Activated CD4-positive, alpha-beta T cell treated with anti-CD3 and anti-CD28 coated beads, Interleukin-2, amount 10 ng/mL, durations not matched to agents 24 days and 14 days (primary cell): ENCODE measurements at regions of chr18 and their contacts with region 1.

Region 1: DNA sequence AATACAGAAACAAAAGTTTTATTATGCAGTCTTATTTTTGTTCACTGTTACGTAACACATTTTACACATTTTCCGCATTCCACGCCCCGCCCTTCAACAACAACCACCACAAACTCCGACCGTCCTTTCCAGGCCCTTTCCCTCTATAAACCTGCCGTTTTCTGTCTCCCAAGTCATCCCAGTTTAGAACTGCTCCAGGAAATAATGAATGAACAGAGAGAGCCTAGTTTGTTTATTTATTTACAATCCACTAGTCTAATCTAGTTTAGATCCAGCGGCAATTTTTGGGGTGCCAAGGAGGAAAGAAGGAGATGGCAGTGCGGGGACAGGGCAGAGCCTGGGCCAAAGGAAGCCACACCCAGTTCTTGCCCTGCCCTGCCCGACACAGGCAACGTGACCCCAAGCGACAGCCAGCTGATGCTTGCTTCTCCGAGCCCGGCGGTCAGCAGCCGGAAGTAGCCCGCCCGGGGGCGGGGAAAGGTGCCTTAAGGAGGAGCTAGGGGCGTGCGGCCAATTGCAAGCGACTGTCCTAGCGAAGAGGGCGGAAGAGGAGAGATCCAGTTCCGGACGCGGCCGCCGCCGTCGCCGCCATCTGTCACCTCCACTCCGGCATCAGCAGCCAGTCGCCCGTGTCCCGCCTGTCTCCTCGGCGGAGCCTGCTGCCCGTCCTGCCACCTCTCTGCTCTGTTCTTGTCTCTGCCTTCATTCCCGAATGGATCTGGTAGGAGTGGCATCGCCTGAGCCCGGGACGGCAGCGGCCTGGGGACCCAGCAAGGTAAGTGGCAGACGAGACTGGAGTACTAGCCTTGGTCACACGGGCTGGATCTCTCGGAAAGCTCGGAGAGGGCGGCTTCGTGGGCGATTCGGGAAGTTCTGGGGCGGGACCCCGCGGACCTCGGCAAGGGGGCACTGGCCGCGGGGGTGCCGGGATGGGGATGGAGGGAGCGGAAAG is at the start of gene RIOK3:
- DNase-seq: peak; percentile 99
- H3K4me3 Mint-ChIP-seq: peak within 1 kb of the TSS; percentile 100
- H3K27ac Mint-ChIP-seq: peak within 1 kb of the TSS; percentile 95
- H3K4me1 Mint-ChIP-seq: peaks cover 38% of the 10 kb centered on the region
- H3K27me3 Mint-ChIP-seq: peaks cover 6% of the 10 kb centered on the region
- total RNA-seq, gene RIOK3: 46.7 and 53.3 TPM in 2 replicates

Region 2: DNA sequence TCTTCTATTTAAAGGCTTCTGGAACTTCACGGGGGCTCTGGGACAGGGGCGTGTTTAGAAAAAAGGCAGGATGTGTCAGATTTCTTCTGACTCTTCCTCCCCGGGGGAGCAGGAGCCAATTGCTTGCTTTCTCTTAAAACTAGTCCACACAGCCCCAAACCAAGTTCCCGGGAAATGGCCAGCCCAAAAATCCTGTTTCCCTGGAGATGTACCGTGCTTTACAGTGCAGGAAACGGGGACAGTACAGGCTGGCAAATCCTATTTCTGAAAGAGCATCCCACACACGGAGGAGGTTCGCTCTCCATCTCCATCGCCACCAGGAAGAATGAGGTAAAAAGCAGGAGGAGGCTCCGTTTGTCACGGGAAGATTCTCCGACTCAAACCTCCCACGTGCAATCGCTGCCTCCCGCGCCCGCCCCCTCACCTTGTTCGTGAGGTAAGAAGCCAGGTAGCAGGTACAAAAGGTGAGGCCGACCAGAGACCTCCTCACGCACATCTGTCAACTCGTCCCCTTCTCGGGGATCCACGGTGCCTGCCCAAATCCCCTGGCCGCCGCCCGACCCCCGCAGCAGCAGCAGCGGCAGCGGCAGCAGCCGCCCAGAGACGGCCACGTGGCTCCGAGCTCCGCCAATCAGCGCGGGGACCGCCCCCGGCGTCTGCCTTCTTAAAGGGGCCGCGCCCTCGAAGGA is 15.5 kb before region 1 on chr18:
- intact Hi-C with region 1: loop called (anchors 1 kb)
- DNase-seq: peak; percentile 94
- H3K4me3 Mint-ChIP-seq: peak overlapping the region; percentile 89
- H3K27ac Mint-ChIP-seq: peak overlapping the region; percentile 89
- H3K4me1 Mint-ChIP-seq: peaks cover 14% of the 10 kb centered on the region
- H3K27me3 Mint-ChIP-seq: peaks cover 2% of the 10 kb centered on the region

Region 3: GRCh38 chr18:23540867-23541266 is 87.9 kb after region 1 on chr18:
- intact Hi-C with region 1: no loop called
- DNase-seq: peak; percentile 83
- H3K4me3 Mint-ChIP-seq: peak overlapping the region; percentile 84
- H3K27ac Mint-ChIP-seq: peak overlapping the region; percentile 83
- H3K4me1 Mint-ChIP-seq: peaks cover 35% of the 10 kb centered on the region
- H3K27me3 Mint-ChIP-seq: no peaks in the 10 kb centered on the region